Panc1 (cell line): ENCODE measurements at regions of chr6 and their contacts with region 1.

Region 1: GRCh38 chr6:155188707-155189496 is 74.9 kb upstream of the CLDN20 start:
- DNase-seq: no peak
- ATAC-seq: peak; percentile 48
- H3K4me3 ChIP-seq: peak overlapping the region in 1 of 2 experiments; percentile 37; a peak in 2 of 4 replicates
- H3K27ac ChIP-seq: peak overlapping the region; percentile 96
- H3K4me1 ChIP-seq: peaks cover 59% of the 10 kb centered on the region
- H3K27me3 ChIP-seq: no peaks in the 10 kb centered on the region
- CTCF ChIP-seq: no peak

Region 2: GRCh38 chr6:155314092-155314772 is 125.3 kb after region 1 on chr6 and contains the start of gene TFB1M:
- CTCF ChIA-PET with region 1: no interaction called
- POLR2A ChIA-PET with region 1: no interaction called
- in situ Hi-C with region 1: no loop called
- intact Hi-C with region 1: loop called (anchors 10 kb)
- DNase-seq: peak; percentile 96
- ATAC-seq: peak; percentile 99
- H3K4me3 ChIP-seq: peak within 1 kb of the TSS; percentile 80 to 97
- H3K27ac ChIP-seq: peak within 1 kb of the TSS; percentile 98
- H3K4me1 ChIP-seq: peaks cover 17% of the 10 kb centered on the region
- H3K27me3 ChIP-seq: no peaks in the 10 kb centered on the region
- CTCF ChIP-seq: no peak
- total RNA-seq, gene TFB1M: 32.0 TPM